ENCODE measurements at regions of chr9 and their contacts with region 1.

Region 1: DNA sequence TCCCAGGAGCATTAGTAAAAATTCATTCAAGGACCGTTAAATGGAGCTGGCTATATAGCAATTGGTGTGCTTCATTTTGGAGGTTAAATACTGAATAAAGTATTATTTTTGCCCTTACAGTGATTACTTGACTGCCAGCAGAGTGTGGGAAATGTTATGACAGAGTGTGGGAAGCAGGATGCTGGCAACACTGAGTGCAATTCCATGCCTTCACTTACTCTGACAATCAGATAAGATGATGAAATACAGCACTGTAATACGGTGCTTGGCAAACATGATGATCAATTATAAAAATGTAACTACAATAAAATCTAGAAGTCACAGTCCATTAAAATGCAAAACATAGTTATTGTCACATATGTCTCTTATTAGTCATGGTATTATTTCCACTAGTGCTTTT is 651.3 kb downstream of the PTPRD start:
- DNase-seq: no peak
- ATAC-seq: no peak
- H3K4me3 ChIP-seq: no peak overlapping the region
- H3K4me3 Mint-ChIP-seq: no peak overlapping the region
- H3K27ac ChIP-seq: no peak overlapping the region
- H3K27ac Mint-ChIP-seq: no peak overlapping the region
- H3K4me1 ChIP-seq: no peaks in the 10 kb centered on the region
- H3K4me1 Mint-ChIP-seq: no peaks in the 10 kb centered on the region
- H3K27me3 ChIP-seq: no peaks in the 10 kb centered on the region
- H3K27me3 Mint-ChIP-seq: no peaks in the 10 kb centered on the region
- CTCF ChIP-seq: no peak

Region 2: DNA sequence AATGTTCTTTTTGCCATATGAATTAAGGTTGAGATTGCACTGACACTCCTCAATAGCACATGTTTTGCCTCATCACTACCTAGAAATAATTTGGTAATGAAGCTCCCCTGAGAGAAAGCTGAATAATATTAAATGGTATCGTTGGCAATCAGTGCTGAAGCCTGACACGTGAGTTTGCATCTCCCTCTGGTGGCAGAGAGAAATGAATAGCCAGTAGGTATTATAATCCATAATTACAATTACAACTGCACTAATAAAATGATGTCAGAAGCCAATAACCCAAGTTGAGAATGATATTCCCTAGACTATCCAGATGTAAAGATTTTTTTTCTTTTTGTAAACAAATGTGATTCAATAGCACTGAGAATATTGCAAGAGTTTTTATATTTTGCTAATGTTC is 49.0 kb before region 1 on chr9:
- CTCF ChIA-PET with region 1: no interaction called
- POLR2A ChIA-PET with region 1: no interaction called
- intact Hi-C with region 1: loop called in 1 of 2 experiments (anchors 5 kb)
- DNase-seq: no peak
- ATAC-seq: no peak
- H3K4me3 ChIP-seq: no peak overlapping the region
- H3K4me3 Mint-ChIP-seq: no peak overlapping the region
- H3K27ac ChIP-seq: no peak overlapping the region
- H3K27ac Mint-ChIP-seq: no peak overlapping the region
- H3K4me1 ChIP-seq: no peaks in the 10 kb centered on the region
- H3K4me1 Mint-ChIP-seq: no peaks in the 10 kb centered on the region
- H3K27me3 ChIP-seq: no peaks in the 10 kb centered on the region
- H3K27me3 Mint-ChIP-seq: no peaks in the 10 kb centered on the region
- CTCF ChIP-seq: no peak

Region 3: DNA sequence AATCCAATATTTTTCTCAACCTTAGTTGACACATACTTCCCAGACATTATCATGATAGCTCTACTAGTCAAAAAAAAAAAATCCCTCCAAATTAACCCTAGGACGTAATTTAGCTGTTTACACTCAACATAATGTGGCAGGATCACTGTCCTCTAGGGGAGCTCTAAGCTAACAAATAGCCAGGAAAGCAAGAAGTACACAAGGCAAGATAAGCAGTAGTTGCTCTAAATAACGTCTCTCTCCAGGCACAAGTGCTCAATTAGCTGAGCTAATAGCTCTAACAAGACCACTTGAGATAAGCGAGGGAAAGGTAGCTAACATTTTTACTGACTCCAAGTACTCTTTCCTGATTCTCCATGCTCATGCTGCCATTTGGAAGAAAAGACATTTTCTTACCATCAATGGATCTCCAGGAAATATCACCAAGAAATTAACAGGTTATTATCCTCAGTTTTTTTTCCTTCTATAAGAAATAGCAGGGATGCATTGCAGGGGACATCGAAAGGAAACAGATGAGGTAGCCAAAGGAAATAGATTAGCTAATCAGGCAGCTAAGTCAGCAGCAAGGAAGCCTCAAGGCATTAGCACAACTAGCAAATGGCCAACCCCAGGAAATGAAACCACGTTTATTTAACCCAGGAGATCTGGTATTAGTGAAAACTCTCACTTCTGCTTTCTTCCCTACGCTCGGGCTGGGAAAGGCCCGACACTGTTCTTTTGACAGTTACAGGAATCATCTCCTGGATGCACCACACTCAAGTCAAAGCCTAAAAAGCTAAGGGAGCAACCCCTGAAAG is 37.2 kb after region 1 on chr9:
- CTCF ChIA-PET with region 1: no interaction called
- POLR2A ChIA-PET with region 1: no interaction called
- intact Hi-C with region 1: no loop called
- DNase-seq: no peak
- ATAC-seq: no peak
- H3K4me3 ChIP-seq: no peak overlapping the region
- H3K4me3 Mint-ChIP-seq: no peak overlapping the region
- H3K27ac ChIP-seq: no peak overlapping the region
- H3K27ac Mint-ChIP-seq: no peak overlapping the region
- H3K4me1 ChIP-seq: no peaks in the 10 kb centered on the region
- H3K4me1 Mint-ChIP-seq: no peaks in the 10 kb centered on the region
- H3K27me3 ChIP-seq: no peaks in the 10 kb centered on the region
- H3K27me3 Mint-ChIP-seq: no peaks in the 10 kb centered on the region
- CTCF ChIP-seq: no peak

Region 4: GRCh38 chr9:10534850-10535249 is 573.4 kb after region 1 on chr9:
- CTCF ChIA-PET with region 1: no interaction called
- POLR2A ChIA-PET with region 1: no interaction called
- intact Hi-C with region 1: no loop called
- DNase-seq: no peak
- ATAC-seq: no peak
- H3K4me3 ChIP-seq: no peak overlapping the region
- H3K4me3 Mint-ChIP-seq: no peak overlapping the region
- H3K27ac ChIP-seq: no peak overlapping the region
- H3K27ac Mint-ChIP-seq: no peak overlapping the region
- H3K4me1 ChIP-seq: no peaks in the 10 kb centered on the region
- H3K4me1 Mint-ChIP-seq: no peaks in the 10 kb centered on the region
- H3K27me3 ChIP-seq: no peaks in the 10 kb centered on the region
- H3K27me3 Mint-ChIP-seq: no peaks in the 10 kb centered on the region
- CTCF ChIP-seq: no peak

Measured in CD8-positive, alpha-beta T cell (primary cell).